ENCODE measurements at regions of chr18 and their contacts with region 1.

Region 1: GRCh38 chr18:69958422-69958821 is 10.7 kb upstream of the CD226 start:
- H3K4me3 Mint-ChIP-seq: peak overlapping the region; percentile 8
- H3K27ac Mint-ChIP-seq: no peak overlapping the region
- H3K4me1 Mint-ChIP-seq: peaks cover 8% of the 10 kb centered on the region
- H3K27me3 Mint-ChIP-seq: peaks cover under 1% of the 10 kb centered on the region

Region 2: GRCh38 chr18:69898241-69898861 is 60.1 kb before region 1 on chr18:
- intact Hi-C with region 1: no loop called
- H3K4me3 Mint-ChIP-seq: no peak overlapping the region
- H3K27ac Mint-ChIP-seq: no peak overlapping the region
- H3K4me1 Mint-ChIP-seq: peaks cover 29% of the 10 kb centered on the region
- H3K27me3 Mint-ChIP-seq: no peaks in the 10 kb centered on the region

Region 3: DNA sequence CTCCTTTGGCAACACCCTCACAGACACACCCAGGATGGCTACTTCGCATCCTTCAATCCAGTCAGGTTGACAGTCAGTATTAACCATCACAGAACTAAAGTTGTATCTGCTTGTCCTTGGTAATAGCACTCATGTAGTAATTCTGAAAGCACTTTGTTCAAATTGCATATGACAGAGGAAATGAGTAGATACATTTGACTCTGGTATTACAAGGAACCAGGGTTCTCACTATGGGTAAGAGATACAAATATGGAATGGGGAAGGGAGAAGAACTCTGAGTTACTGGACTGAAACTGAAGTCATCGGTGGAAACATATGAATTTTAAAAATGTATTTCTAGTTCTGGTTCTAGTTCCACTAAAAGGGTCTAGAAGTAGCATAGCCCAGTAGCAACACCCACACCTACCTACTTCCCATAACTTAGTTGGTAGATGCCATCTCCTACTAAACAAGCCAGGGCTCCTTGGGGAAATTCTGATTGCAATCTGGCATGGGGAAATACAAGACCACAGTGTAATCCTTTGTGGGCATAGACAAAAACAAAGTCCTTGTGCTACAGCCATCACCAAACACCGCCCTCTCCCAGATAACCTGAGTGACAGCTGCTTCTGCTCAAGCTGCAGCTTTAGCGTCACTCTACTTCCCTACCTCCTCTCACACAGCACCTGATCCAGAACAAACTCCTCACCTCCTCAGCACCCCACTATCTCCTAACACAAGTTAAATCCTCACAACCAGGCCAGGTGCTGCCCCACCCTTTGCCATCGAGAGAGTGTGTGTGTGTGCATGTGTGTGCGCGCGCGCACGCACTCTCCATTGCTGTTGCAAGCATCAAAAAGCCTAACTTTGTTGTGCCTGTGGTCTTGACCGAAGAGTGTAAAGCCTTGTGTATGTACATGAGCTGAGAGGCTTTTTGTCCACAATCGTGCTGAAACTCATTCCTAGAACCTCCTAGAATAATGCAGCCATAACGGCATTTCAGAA is 20.6 kb after region 1 on chr18:
- intact Hi-C with region 1: loop called (anchors 1 kb)
- H3K4me3 Mint-ChIP-seq: no peak overlapping the region
- H3K27ac Mint-ChIP-seq: peak overlapping the region; percentile 81
- H3K4me1 Mint-ChIP-seq: peaks cover 47% of the 10 kb centered on the region
- H3K27me3 Mint-ChIP-seq: no peaks in the 10 kb centered on the region